ENCODE measurements at regions of chr19 and their contacts with region 1.

Region 1: DNA sequence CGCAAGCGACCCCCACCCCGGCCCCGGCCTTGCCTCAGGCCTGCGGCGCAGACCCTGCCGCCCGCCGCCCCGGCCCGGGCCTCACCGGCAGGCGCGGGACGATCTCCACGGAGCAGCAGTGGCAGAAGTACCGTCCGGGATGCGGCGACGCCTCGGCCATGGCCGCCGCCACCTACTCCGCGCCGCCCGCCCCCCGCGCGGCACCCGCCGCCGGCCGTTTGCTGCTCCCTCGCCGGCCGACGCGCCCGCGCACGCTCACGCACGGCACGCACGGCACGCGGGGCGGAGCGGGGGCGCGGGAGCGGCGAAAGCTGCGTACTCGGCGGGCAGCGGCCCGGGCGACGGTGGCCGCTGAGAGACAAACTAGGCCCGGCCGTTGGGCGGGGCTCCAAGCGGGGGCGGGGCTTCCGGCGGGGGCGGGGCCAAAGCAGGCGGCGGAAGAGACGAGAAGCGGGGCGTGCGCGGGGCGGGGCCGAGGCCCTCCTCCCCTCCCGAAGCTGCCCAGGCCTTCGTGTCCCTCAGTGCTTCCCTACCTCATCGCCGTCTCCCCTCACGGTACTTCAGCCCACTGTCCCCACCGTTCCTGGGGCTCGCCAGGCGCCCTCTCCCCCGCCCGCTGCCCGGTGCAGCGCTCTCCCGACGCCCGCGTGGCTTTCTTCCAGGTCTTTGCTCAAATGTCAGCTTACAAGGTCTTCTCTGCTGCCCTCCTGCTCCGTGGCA is at the start of gene RNF126:
- DNase-seq: peak; percentile 90
- ATAC-seq: peak; percentile 67
- H3K4me3 Mint-ChIP-seq: peak within 1 kb of the TSS; percentile 95
- H3K27ac Mint-ChIP-seq: peak within 1 kb of the TSS; percentile 96
- H3K4me1 Mint-ChIP-seq: peaks cover 46% of the 10 kb centered on the region
- H3K27me3 Mint-ChIP-seq: no peaks in the 10 kb centered on the region
- CTCF ChIP-seq: no peak
- total RNA-seq, gene RNF126: 75.9 and 82.7 TPM in 2 replicates

Region 2: GRCh38 chr19:531009-531752 is 131.9 kb before region 1 on chr19:
- CTCF ChIA-PET with region 1: no interaction called
- POLR2A ChIA-PET with region 1: interaction called, 8 read pairs
- intact Hi-C with region 1: loop called (anchors 2 kb)
- DNase-seq: peak; percentile 99
- ATAC-seq: peak; percentile 81
- H3K4me3 Mint-ChIP-seq: peak overlapping the region; percentile 85
- H3K27ac Mint-ChIP-seq: peak overlapping the region; percentile 77
- H3K4me1 Mint-ChIP-seq: peaks cover 18% of the 10 kb centered on the region
- H3K27me3 Mint-ChIP-seq: peaks cover 1% of the 10 kb centered on the region
- CTCF ChIP-seq: no peak

Region 3: DNA sequence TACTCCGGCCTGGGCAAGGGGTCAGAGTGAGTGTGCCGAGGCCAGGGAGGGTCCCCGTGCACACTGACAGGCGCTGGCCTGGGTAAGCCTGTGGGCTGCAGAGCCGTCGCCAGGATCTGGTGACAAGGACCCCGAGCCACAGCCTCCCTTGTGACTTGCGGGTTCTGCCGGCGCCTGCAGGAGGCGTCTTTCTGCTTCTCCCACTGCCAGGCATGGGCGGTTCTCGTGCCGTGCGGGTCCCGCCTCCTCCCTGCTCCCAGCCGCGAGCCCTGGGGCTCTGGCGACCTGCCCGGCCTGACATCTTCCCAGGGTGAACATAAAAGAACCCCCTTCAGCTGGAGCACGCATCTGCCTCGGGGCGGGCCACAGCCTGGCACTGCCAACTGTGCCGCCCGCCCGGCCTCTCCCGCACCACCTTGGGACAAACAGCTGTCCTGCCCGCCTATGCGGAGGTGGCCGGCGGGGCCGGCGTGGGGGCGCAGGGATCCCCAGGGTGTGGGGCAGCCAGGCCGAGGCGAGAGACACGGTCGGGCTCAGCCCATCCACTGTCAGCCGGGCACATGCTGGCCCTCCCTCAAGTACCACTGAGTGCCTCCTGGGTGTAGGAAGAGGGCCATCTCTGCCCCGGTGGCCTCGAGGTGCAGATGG is 74.9 kb before region 1 on chr19:
- CTCF ChIA-PET with region 1: interaction called, 3 read pairs
- POLR2A ChIA-PET with region 1: interaction called, 8 read pairs
- intact Hi-C with region 1: loop called (anchors 2 kb)
- DNase-seq: peak; percentile 38
- ATAC-seq: peak; percentile 41
- H3K4me3 Mint-ChIP-seq: no peak overlapping the region
- H3K27ac Mint-ChIP-seq: no peak overlapping the region
- H3K4me1 Mint-ChIP-seq: peaks cover 8% of the 10 kb centered on the region
- H3K27me3 Mint-ChIP-seq: peaks cover 8% of the 10 kb centered on the region
- CTCF ChIP-seq: no peak

Region 4: DNA sequence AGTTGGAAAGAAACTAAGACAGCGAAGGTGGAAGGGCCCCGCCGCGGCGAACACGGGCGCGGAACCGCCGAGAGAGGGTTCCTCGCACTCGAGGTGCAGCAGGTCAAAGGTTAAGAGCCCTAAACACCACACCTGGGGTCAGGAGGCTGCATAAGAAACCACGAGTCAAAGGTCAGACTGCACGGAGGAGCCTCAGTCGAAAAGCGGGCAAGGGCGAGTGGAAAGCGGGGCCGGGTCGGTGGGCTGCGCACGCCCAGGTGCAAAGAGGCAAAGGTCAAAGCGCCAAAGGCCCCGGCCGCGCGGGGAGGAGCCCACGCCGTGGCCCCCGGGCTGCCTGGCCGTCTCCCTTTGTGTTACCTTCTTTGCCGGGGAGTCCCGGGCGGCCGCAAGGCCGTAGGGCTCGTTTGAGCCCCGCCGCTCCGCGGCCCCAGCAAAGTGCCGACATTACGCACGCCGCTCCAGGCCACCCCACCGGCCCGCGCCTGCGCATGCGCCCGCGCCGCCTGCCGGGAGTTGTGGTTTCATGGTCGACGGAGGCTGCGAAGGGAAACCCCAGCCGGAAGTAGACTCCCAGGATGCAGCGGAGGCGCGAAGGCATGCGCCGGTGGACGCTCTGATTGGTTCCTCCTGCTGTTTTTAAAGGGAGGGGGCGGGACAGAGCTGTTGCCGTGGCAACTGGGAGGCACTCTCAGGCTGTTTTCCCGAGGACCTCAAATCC is 29.9 kb before region 1 on chr19 and contains the start of gene POLRMT:
- CTCF ChIA-PET with region 1: no interaction called
- POLR2A ChIA-PET with region 1: interaction called, 12 read pairs
- intact Hi-C with region 1: loop called (anchors 1 kb)
- DNase-seq: peak; percentile 93
- ATAC-seq: peak; percentile 89
- H3K4me3 Mint-ChIP-seq: peak within 1 kb of the TSS; percentile 95
- H3K27ac Mint-ChIP-seq: peak within 1 kb of the TSS; percentile 93
- H3K4me1 Mint-ChIP-seq: peaks cover 36% of the 10 kb centered on the region
- H3K27me3 Mint-ChIP-seq: no peaks in the 10 kb centered on the region
- CTCF ChIP-seq: no peak
- total RNA-seq, gene POLRMT: 54.7 and 58.2 TPM in 2 replicates

Region 5: GRCh38 chr19:680287-681028 is 17.3 kb after region 1 on chr19:
- CTCF ChIA-PET with region 1: interaction called, 11 read pairs
- POLR2A ChIA-PET with region 1: interaction called, 29 read pairs
- intact Hi-C with region 1: loop called (anchors 1 kb)
- DNase-seq: peak; percentile 95
- ATAC-seq: peak; percentile 80
- H3K4me3 Mint-ChIP-seq: peak overlapping the region; percentile 95
- H3K27ac Mint-ChIP-seq: peak overlapping the region; percentile 98
- H3K4me1 Mint-ChIP-seq: peaks cover 14% of the 10 kb centered on the region
- H3K27me3 Mint-ChIP-seq: peaks cover 4% of the 10 kb centered on the region
- CTCF ChIP-seq: no peak

Region 6: GRCh38 chr19:925526-926322 is 262.6 kb after region 1 on chr19 and contains the start of gene ARID3A:
- CTCF ChIA-PET with region 1: no interaction called
- POLR2A ChIA-PET with region 1: interaction called, 5 read pairs
- intact Hi-C with region 1: loop called (anchors 5 kb)
- DNase-seq: peak; percentile 84
- ATAC-seq: peak; percentile 66
- H3K4me3 Mint-ChIP-seq: peak within 1 kb of the TSS; percentile 86
- H3K27ac Mint-ChIP-seq: peak within 1 kb of the TSS; percentile 82
- H3K4me1 Mint-ChIP-seq: peaks cover 22% of the 10 kb centered on the region
- H3K27me3 Mint-ChIP-seq: no peaks in the 10 kb centered on the region
- CTCF ChIP-seq: no peak
- total RNA-seq, gene ARID3A: 67.7 and 74.9 TPM in 2 replicates